ENCODE measurements at regions of chr9 and their contacts with region 1.

Region 1: DNA sequence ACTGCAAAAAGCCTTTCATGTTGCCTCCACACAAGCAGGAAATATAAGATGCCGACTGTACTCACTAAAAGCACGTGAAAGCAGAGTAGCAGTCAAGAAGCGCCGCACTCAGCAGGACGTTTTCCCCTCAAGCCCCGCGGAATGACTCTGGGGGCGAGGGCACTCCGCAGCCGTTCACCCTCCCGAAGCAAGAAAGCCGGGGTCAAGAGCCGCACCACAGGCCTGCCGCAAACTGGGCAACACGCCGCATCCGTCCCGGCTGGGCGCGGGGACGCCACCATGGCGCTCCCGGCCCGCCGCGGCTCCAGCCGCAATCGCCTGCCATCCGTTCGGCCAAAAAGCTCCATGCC is 364 bp downstream of the RPS6 start:
- DNase-seq: no peak
- H3K4me3 Mint-ChIP-seq: peak overlapping the region; percentile 91
- H3K27ac Mint-ChIP-seq: peak overlapping the region; percentile 97
- H3K4me1 Mint-ChIP-seq: peaks cover 37% of the 10 kb centered on the region
- H3K27me3 Mint-ChIP-seq: no peaks in the 10 kb centered on the region

Region 2: DNA sequence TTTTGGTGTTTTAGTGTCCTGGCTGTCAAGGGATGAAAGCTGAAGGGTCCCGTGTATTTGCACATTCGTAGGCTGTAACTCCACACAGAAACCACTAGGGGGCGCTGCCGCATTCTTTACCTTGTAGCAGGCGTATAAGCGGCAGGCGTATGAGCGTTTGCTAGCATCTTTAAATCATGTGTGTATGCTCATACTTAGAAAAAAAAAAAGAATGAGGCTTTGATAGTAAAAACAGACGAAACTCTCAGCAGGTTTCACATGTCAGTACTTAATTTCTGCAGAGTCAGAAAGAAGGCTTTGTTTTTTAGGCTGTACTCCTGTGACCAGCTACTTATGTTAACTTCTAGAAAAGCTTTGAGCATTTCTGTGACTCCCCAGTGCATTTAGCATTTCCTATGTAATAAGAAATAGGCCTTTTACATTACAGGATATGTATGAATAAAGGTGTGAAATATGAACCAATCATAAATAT is 1124.5 kb before region 1 on chr9:
- CTCF ChIA-PET with region 1: no interaction called
- intact Hi-C with region 1: loop called (anchors 5 kb)
- DNase-seq: peak; percentile 86
- H3K4me3 Mint-ChIP-seq: no peak overlapping the region
- H3K27ac Mint-ChIP-seq: no peak overlapping the region
- H3K4me1 Mint-ChIP-seq: peaks cover 2% of the 10 kb centered on the region
- H3K27me3 Mint-ChIP-seq: peaks cover 3% of the 10 kb centered on the region

Region 3: GRCh38 chr9:19127881-19128500 is 251.7 kb before region 1 on chr9:
- CTCF ChIA-PET with region 1: no interaction called
- intact Hi-C with region 1: loop called (anchors 1 kb)
- DNase-seq: peak; percentile 45
- H3K4me3 Mint-ChIP-seq: peak overlapping the region; percentile 92
- H3K27ac Mint-ChIP-seq: peak overlapping the region; percentile 91
- H3K4me1 Mint-ChIP-seq: peaks cover 53% of the 10 kb centered on the region
- H3K27me3 Mint-ChIP-seq: no peaks in the 10 kb centered on the region

Region 4: GRCh38 chr9:19320495-19320894 is 59.2 kb before region 1 on chr9:
- CTCF ChIA-PET with region 1: no interaction called
- intact Hi-C with region 1: loop called (anchors 10 kb)
- DNase-seq: no peak
- H3K4me3 Mint-ChIP-seq: no peak overlapping the region
- H3K27ac Mint-ChIP-seq: no peak overlapping the region
- H3K4me1 Mint-ChIP-seq: no peaks in the 10 kb centered on the region
- H3K27me3 Mint-ChIP-seq: no peaks in the 10 kb centered on the region

Region 5: DNA sequence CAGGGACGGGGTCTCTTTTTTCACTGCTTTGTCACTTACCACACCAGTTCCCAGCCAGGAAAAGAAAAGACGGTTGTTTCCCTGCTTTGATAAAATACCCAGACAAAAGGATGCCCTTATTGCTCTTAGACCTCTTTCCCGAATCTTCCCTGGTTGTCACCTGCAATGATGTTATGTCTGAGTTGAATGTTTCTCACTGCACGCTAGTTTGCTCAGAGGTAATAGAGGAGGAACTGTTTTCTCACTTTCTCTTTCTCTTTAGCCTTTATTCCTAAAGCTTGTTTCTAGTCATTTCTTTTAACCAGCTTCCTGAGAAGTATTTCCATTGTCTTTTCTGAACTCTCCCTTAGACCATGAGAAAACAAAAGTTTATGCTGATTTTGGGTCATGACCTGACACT is 62.1 kb after region 1 on chr9:
- CTCF ChIA-PET with region 1: no interaction called
- intact Hi-C with region 1: loop called (anchors 1 kb)
- DNase-seq: no peak
- H3K4me3 Mint-ChIP-seq: peak overlapping the region; percentile 45
- H3K27ac Mint-ChIP-seq: peak overlapping the region; percentile 40
- H3K4me1 Mint-ChIP-seq: peaks cover 17% of the 10 kb centered on the region
- H3K27me3 Mint-ChIP-seq: no peaks in the 10 kb centered on the region